ENCODE measurements at regions of chr7 and their contacts with region 1.

Region 1: DNA sequence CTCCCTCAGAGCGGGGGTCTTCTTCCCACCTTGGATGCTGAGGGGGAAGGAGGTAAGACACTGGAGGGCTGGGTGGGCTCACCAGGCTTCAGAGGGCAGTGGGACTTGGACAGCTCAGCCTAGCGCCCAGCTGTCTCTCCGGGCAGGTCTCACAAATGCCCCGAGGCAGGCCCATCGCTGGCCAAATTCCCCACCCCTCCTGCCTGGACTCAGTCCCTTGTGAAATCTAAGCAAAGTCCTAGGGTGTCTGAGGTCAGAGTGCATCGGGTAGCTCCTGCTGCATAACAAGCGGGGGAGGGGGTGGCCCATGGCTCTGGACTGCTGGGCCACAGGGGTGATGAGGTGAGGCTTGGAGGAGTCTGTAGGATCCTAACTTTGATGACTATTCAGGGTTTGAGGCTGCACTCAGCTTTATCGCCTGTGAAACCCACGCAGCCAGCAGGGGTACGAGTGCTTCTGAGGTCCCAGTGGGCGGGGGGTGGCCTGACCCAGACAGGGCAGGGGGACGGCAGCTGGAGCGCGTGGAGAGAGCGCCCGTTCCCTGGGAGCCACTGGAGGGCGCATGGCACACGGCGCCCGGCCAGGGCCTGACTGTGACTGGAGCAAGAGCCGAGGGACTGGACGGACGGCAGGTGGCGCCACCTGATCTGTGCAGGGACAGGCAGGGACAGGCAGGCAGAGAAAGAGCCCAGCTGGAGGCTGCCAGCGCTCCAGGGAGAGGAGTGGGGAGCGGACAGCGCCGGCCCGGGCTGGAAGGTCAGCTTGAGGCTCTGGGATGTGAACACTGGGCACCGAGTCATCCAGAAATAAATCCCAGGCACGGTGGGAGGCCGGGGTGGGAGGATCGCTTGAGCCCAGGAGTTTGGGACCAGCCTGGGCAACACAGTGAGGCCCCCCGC is 10.0 kb downstream of the CYP2W1 start:
- DNase-seq: peak; percentile 98
- H3K4me3 ChIP-seq: no peak overlapping the region
- H3K27ac ChIP-seq: no peak overlapping the region
- H3K4me1 ChIP-seq: peaks cover 12 to 27% (median 22%) of the 10 kb centered on the region in 4 donors
- H3K27me3 ChIP-seq: peaks cover 0 to 44% (median 11%) of the 10 kb centered on the region in 4 donors
- CTCF ChIP-seq: peak; percentile 99 to 100 (median 100)
- EP300 ChIP-seq: no peak
- POLR2A ChIP-seq: no peak

Region 2: DNA sequence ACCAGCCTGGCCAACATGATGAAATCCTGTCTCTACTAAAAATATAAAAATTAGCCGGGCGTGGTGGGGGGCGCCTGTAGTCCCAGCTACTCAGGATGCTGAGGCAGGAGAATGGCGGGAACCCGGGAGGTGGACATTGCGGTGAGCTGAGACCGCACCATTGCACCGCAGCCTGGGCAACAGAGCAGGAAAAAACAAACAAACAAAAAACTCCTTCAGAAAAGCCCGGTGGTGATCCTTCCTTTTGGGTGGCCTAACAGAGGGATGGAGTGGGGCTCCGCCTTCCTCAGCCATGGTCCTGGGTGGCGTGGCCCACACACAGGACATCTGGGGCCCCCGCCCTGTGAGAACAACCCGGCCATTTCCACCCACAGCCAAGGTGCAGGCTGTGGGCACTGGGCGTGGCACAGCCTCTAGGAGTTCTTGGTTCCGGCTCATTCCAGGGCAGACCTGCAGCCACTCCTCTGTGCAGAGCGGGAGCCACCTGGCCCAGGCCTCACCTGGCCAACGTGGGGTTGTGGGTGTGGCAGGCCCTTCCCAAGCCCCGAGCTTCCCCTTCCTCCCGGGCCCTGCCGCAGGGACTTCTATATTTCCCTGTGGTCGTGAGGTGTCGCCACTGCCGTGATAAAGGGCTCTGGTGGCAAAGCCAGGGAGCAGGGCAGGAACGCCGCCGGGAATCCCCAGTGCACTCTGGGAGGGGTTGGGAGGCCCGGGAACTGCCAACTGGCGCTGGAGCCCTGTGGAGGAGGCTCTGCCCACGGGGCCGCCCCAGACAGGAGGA is 79.0 kb before region 1 on chr7:
- intact Hi-C with region 1: no loop called
- DNase-seq: no peak
- H3K4me3 ChIP-seq: no peak overlapping the region
- H3K27ac ChIP-seq: no peak overlapping the region
- H3K4me1 ChIP-seq: peaks cover 11 to 47% (median 33%) of the 10 kb centered on the region in 4 donors
- H3K27me3 ChIP-seq: no peaks in the 10 kb centered on the region
- CTCF ChIP-seq: no peak
- EP300 ChIP-seq: no peak
- POLR2A ChIP-seq: no peak

Region 3: DNA sequence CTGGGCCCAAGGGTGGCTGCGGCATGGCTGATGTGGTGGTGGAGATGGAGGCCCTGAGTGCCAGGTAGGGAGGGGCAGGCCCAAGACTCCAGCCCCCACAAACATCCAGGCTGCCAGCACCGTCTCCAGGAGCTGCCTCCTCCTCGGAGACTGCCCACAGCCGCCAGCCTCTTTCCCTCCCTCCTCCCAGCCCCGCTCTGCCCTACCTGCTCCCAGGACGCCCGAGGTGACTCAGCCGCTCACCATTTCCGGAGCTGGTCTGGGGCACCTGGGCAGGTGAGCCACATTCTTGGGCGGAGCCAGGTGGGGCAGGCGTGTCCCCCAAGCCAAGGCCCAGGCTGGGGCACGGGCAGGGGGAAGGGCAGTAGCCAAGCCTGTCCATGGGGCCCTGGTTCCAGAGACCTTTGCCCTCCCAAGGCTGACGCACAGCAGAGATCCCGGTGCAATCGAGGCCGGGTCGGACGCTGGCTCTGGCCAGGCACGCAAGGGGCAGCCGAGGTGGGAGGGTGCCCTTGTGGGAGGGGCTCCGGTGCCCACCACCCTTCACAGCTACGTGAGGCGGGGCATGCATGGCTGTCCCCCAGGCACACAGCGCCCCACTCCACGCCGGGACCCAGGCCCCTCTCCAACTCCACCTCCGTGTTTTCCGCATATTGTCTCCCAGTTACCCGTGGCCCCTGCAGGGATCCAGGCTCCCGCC is 47.3 kb before region 1 on chr7:
- intact Hi-C with region 1: no loop called
- DNase-seq: no peak
- H3K4me3 ChIP-seq: no peak overlapping the region
- H3K27ac ChIP-seq: no peak overlapping the region
- H3K4me1 ChIP-seq: no peaks in the 10 kb centered on the region
- H3K27me3 ChIP-seq: no peaks in the 10 kb centered on the region
- CTCF ChIP-seq: no peak
- EP300 ChIP-seq: no peak
- POLR2A ChIP-seq: no peak

Region 4: GRCh38 chr7:1028031-1028770 is 35.2 kb after region 1 on chr7:
- intact Hi-C with region 1: loop called (anchors 5 kb)
- DNase-seq: no peak
- H3K4me3 ChIP-seq: peak overlapping the region; percentile 87 to 92 (median 90)
- H3K27ac ChIP-seq: peak overlapping the region; percentile 91 to 100 (median 96)
- H3K4me1 ChIP-seq: peaks cover 19 to 66% (median 48%) of the 10 kb centered on the region in 4 donors
- H3K27me3 ChIP-seq: no peaks in the 10 kb centered on the region
- CTCF ChIP-seq: no peak
- EP300 ChIP-seq: no peak
- POLR2A ChIP-seq: no peak

Region 5: GRCh38 chr7:1065263-1066260 is 72.6 kb after region 1 on chr7:
- intact Hi-C with region 1: loop called (anchors 1 kb)
- DNase-seq: peak; percentile 96
- H3K4me3 ChIP-seq: peak overlapping the region; percentile 28 to 45 (median 38)
- H3K27ac ChIP-seq: no peak overlapping the region
- H3K4me1 ChIP-seq: peaks cover 15 to 32% (median 26%) of the 10 kb centered on the region in 4 donors
- H3K27me3 ChIP-seq: no peaks in the 10 kb centered on the region
- CTCF ChIP-seq: peak in 2 of 3 experiments; percentile 94 to 97
- EP300 ChIP-seq: no peak
- POLR2A ChIP-seq: no peak

Region 6: GRCh38 chr7:1175967-1176851 is 183.3 kb after region 1 on chr7:
- intact Hi-C with region 1: loop called (anchors 5 kb)
- DNase-seq: peak; percentile 96
- H3K4me3 ChIP-seq: peak overlapping the region; percentile 31 to 42 (median 32)
- H3K27ac ChIP-seq: peak overlapping the region in 1 of 4 donors; percentile 8
- H3K4me1 ChIP-seq: peaks cover 8 to 17% (median 13%) of the 10 kb centered on the region in 4 donors
- H3K27me3 ChIP-seq: peaks cover 0 to 16% (median 0%) of the 10 kb centered on the region in 4 donors
- CTCF ChIP-seq: peak in 2 of 3 experiments; percentile 88 to 90
- EP300 ChIP-seq: no peak
- POLR2A ChIP-seq: no peak

Region 7: DNA sequence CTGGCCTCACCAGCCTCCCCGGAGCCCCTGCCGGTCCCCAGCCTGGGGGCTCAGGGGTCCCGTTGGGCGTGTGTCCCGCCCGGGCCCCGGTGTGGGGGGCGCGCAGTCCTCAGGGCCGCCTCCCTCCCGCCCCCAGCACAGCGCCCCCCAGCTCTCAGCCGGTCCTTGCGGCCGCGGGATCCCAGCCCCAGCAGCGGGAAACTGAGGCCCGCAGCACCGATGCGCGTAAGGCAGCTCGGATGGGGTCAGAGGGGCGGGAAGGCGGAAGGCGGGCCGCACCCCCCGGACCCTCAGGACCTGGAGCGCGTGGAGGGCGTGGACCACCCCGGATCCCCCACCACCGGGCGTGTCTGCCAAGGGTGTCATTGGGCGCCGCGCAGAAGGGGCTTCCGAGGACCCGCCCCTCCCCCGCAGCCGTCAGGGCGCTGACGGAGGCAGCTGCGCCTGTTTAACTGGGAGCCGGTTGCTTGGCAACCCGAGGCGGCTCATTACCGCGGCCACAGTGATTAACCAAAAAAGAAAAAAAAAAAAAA is 254.6 kb after region 1 on chr7:
- intact Hi-C with region 1: no loop called
- DNase-seq: no peak
- H3K4me3 ChIP-seq: peak overlapping the region in 2 of 4 donors; percentile 16 to 21
- H3K27ac ChIP-seq: no peak overlapping the region
- H3K4me1 ChIP-seq: peaks cover 22 to 52% (median 37%) of the 10 kb centered on the region in 4 donors
- H3K27me3 ChIP-seq: peaks cover 17 to 100% (median 86%) of the 10 kb centered on the region in 4 donors
- CTCF ChIP-seq: no peak
- EP300 ChIP-seq: no peak
- POLR2A ChIP-seq: no peak